Activated CD4-positive, alpha-beta memory T cell treated with anti-CD3 and anti-CD28 coated beads, Interleukin-2, amount 10 ng/mL, durations not matched to agents 7 days and 5 days (primary cell): ENCODE measurements at regions of chr16 and their contacts with region 1.

Region 1: DNA sequence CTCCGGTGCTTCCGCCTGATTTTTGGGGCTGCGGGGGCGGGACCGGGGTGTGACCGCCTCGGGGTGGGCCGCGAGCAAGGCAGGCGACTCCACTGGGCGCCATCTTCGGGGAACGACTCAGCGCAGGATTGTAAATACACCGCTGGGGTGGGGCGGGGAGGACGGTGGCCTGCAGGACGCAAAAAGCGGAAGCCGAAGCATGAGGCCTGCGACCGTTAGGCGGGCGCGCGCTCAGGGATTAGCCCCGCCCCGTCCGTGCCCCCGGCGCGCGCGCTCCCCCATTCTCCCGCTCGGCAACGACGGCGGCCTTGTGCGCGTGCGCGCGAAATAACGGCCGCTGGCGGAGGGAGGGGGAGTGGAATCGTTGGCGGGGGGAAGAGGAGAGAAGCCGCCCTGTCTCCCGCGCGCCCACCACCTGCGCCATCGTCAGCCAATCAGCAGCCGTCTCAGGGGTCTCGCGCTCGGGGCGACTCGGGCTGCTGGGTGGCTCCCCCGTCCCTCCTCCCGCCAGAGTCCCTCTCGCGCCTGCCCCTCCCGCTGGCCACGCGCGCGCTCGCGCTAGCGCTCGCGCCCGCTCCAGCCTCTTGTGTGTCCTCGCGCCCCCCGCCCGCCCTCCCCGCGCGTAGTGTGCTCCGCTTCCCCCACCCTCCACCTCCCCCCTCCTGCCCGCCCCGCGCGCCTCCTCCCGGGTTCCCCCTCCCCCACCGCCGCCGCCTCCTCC is 791 bp upstream of the MAZ start:
- DNase-seq: peak; percentile 98
- H3K4me3 Mint-ChIP-seq: peak overlapping the region; percentile 87
- H3K27ac Mint-ChIP-seq: peak overlapping the region; percentile 98
- H3K4me1 Mint-ChIP-seq: peaks cover 48% of the 10 kb centered on the region
- H3K27me3 Mint-ChIP-seq: no peaks in the 10 kb centered on the region

Region 2: DNA sequence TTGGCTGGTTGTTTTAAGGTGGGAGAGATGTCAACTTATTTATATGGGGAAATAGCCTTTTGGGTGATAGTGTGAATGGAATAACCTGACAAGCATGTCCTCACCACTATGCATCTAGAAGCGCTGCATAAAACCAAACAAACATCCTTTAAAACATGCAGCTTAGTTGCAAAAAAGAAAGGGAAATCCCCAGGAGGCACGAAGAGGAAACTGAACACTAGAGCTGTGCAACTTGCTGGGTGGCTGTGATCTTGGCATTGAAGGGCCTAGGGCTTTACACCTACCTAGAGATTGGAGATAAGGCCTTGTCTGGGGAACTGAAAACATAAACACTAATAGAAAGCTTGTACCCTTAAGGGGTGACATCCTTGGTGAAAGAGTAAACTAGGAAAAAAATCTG is 67.0 kb before region 1 on chr16:
- CTCF ChIA-PET with region 1: no interaction called
- POLR2A ChIA-PET with region 1: interaction called, 27 read pairs
- DNase-seq: peak; percentile 56
- H3K4me3 Mint-ChIP-seq: no peak overlapping the region
- H3K27ac Mint-ChIP-seq: peak overlapping the region; percentile 74
- H3K4me1 Mint-ChIP-seq: peaks cover 68% of the 10 kb centered on the region
- H3K27me3 Mint-ChIP-seq: no peaks in the 10 kb centered on the region

Region 3: DNA sequence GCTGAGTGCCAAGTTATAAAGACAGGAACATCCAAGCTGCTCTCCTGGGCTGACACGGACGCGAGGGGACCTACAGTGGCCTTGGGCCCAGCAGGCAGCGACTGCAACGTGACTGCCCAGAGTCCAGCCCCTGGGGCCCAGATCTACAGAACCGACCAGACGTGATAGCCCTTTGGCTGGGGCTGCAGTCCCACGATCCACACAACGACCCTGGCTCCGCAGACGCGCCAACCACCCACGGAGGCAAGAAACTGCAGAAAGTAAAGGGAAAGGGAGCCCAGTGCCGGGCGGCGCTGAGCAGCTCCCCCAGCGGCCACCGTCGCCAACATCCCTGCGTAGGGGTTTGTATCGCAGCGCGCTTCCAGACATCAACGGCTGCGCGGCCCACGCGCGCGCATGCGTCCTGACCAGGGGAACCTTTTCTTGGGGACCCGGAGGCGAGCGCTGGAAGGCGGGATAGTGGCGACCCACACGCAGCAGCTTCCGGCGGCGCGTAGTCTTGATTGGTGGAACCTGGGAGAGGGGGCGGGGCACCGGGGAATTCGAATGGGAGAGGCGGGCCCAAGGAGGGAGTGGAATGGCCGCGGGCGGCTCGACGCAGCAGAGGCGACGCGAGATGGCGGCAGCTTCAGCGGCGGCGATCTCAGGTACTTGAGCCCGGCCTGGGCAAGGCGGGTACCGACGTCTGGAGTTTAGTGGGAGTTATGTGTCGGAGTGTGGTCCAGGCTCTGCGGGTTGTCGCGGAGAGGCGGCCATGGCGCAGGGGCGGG is 15.2 kb before region 1 on chr16 and contains the start of gene KIF22:
- CTCF ChIA-PET with region 1: interaction called, 22 read pairs
- POLR2A ChIA-PET with region 1: interaction called, 260 read pairs
- DNase-seq: peak; percentile 100
- H3K4me3 Mint-ChIP-seq: peak within 1 kb of the TSS; percentile 100
- H3K27ac Mint-ChIP-seq: peak within 1 kb of the TSS; percentile 95
- H3K4me1 Mint-ChIP-seq: peaks cover 48% of the 10 kb centered on the region
- H3K27me3 Mint-ChIP-seq: no peaks in the 10 kb centered on the region
- total RNA-seq, gene KIF22: 187 to 192 TPM

Region 4: GRCh38 chr16:29825145-29826044 is 19.9 kb after region 1 on chr16:
- CTCF ChIA-PET with region 1: interaction called, 71 read pairs
- POLR2A ChIA-PET with region 1: interaction called, 206 read pairs
- DNase-seq: peak; percentile 49
- H3K4me3 Mint-ChIP-seq: peak overlapping the region; percentile 27
- H3K27ac Mint-ChIP-seq: peak overlapping the region; percentile 70
- H3K4me1 Mint-ChIP-seq: peaks cover 63% of the 10 kb centered on the region
- H3K27me3 Mint-ChIP-seq: no peaks in the 10 kb centered on the region

Region 5: DNA sequence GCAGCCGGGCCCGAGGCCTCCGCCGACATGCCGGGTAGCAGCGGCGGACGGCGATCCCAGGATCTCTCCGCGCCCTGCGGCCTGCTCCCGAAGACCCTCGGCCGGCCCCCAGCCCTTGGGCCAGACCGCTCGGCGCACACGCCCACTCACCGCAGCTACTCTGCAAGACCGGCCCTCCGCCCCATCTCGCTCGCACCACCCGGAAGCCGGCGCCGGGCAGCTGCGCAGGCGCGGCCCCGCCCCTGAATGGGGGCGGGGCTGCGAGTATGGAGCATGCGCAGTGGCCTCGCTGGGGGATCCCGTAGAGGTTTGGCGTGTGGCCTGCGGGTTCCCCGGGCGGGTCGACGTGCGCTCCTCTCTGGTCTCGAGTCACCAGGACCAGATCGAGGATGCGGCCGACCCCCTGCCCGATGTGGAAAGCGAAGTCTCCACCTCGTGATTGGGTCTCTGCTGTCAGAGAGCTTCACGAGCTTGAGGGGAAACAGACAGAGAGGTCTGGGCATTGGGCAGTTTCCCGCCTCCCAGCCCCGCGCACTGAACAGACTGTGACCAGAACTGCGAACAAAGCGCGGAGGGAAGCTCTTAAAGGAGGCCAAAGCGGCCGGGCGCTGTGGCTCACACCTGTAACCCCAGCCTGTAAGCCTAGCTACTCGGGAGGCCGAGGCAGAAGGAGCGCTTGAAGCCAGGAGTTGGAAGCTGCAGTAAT is 120.6 kb after region 1 on chr16 and contains the start of gene KCTD13:
- CTCF ChIA-PET with region 1: no interaction called
- POLR2A ChIA-PET with region 1: interaction called, 12 read pairs
- DNase-seq: peak; percentile 92
- H3K4me3 Mint-ChIP-seq: peak within 1 kb of the TSS; percentile 87
- H3K27ac Mint-ChIP-seq: peak within 1 kb of the TSS; percentile 87
- H3K4me1 Mint-ChIP-seq: peaks cover 36% of the 10 kb centered on the region
- H3K27me3 Mint-ChIP-seq: no peaks in the 10 kb centered on the region
- total RNA-seq, gene KCTD13: 34.5 to 36.0 TPM

Region 6: GRCh38 chr16:29940656-29941055 is 135.1 kb after region 1 on chr16:
- CTCF ChIA-PET with region 1: no interaction called
- POLR2A ChIA-PET with region 1: no interaction called
- DNase-seq: no peak
- H3K4me3 Mint-ChIP-seq: no peak overlapping the region
- H3K27ac Mint-ChIP-seq: no peak overlapping the region
- H3K4me1 Mint-ChIP-seq: no peaks in the 10 kb centered on the region
- H3K27me3 Mint-ChIP-seq: peaks cover 11% of the 10 kb centered on the region